ENCODE measurements at regions of chr7 and their contacts with region 1.

Region 1: DNA sequence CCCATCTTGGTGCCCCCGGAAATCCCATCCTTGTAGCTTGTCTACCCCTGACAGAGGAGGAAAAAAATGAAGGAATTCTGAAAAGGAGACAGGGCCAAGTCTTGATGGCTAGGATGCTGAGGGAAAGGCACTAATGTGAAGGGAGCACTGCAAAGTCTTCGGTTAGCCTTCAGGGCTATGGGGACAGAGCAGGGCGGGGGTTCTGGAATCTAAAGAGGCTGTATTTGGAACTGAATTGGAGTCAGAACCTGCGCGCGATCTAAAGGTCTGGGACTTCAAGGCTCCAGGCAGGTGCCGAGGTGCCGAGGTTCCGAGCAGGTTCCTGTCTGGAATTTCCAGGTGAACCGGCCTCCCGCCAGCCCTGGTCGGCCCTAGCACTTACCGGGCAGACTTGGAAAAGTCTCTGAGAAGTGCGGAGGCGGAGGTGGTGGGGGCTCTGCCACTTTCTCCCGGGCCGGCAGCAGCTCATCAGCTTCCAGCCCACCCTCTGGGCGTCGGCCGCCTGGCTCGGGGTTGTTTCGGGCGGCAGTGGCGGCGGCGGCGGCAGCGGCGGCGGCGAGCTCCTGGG is 781 bp downstream of the GBX1 start:
- H3K4me3 ChIP-seq: peak overlapping the region; percentile 48
- H3K27ac ChIP-seq: peak overlapping the region; percentile 40; the same call in 1 of the 2 replicates
- H3K4me1 ChIP-seq: no peaks in the 10 kb centered on the region
- CTCF ChIP-seq: no peak

Region 2: GRCh38 chr7:150753826-150754603 is 412.7 kb before region 1 on chr7:
- CTCF ChIA-PET with region 1: no interaction called
- POLR2A ChIA-PET with region 1: no interaction called
- H3K4me3 ChIP-seq: no peak overlapping the region
- H3K27ac ChIP-seq: no peak overlapping the region
- H3K4me1 ChIP-seq: no peaks in the 10 kb centered on the region
- CTCF ChIP-seq: 0 out of 2 replicates have a peak, but pooled peaks have one; percentile 29

Region 3: DNA sequence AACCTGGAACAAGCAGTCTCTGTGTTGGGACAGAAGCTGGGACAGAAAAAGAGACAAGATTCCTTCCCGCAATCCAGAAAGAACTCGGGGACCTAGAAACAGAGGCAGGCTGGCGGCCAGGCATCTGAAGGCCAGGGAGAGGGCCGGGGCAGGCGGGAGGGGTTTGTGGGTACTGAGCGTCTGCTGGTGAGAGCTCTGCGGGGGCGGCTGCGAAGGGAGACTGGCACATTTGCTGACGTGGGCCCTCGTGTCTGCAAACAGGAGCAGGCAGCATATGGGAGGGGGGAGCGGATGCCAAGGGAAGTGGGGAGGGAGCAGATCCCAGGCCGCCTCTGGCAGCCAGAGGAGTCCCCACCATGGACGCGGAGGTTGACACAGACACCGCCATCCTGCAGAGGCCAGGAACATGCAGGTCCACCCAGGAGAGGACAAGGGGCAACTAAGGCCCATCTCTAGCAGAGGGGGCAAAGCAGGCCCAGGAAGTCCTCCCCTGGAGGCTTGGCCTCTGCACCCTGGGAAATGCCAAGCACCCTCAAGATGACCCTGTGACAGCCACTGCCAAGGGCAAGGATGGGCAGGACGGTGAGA is 220.8 kb before region 1 on chr7:
- CTCF ChIA-PET with region 1: no interaction called
- POLR2A ChIA-PET with region 1: no interaction called
- H3K4me3 ChIP-seq: no peak overlapping the region
- H3K27ac ChIP-seq: no peak overlapping the region
- H3K4me1 ChIP-seq: no peaks in the 10 kb centered on the region
- CTCF ChIP-seq: no peak

Region 4: DNA sequence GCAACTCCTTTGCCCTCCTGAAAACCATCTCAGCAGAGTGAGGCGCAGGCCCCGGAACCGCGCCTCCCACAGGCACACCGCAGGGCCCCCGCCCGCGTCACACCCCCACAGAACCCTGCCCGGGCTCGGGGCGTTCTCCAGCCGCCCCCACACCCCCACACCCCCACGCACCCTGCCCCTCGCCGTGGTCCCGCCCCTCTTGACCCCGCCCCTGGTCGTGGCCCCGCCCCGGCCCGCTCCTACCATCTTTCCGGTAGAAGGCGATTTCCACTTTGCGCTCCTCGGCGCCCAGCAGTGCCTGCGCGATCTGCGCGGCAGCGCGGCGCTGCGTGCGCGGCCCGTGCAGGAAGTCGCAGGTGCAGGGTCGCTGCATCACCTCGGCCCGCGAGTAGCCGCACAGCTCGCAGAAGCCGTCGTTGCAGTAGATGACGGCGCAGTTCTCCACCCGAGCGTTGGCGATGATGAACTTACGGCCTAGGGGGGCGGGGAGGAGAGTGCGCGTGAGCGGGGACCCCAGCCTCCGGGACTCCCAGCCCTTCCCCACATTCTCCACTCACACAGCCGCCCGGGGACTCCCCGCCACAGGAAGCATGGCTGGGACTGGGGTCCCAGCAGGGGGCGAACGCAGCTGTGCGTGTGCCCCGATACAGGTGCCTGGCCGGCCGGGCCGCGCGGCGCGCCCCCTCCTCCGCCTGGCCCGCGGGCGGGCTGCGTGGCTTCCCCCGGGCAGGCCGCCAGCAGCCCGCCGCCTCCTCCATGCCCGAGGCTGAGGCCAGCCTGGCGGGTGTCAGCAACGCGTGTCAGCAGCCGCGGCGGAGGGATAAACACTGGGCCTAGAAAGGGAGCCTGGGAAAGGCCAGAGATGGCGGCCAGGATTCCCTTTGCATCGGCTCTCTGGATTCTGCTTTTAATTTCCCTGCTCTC is 192.0 kb before region 1 on chr7:
- CTCF ChIA-PET with region 1: no interaction called
- POLR2A ChIA-PET with region 1: no interaction called
- H3K4me3 ChIP-seq: peak overlapping the region; percentile 51
- H3K27ac ChIP-seq: peak overlapping the region; percentile 32; the same call in 1 of the 2 replicates
- H3K4me1 ChIP-seq: no peaks in the 10 kb centered on the region; the same call in 1 of the 2 replicates
- CTCF ChIP-seq: peak; percentile 80

Region 5: GRCh38 chr7:151123822-151124464 is 42.8 kb before region 1 on chr7:
- CTCF ChIA-PET with region 1: interaction called, 20 read pairs
- POLR2A ChIA-PET with region 1: no interaction called
- H3K4me3 ChIP-seq: no peak overlapping the region
- H3K27ac ChIP-seq: no peak overlapping the region
- H3K4me1 ChIP-seq: no peaks in the 10 kb centered on the region
- CTCF ChIP-seq: peak; percentile 99

Region 6: DNA sequence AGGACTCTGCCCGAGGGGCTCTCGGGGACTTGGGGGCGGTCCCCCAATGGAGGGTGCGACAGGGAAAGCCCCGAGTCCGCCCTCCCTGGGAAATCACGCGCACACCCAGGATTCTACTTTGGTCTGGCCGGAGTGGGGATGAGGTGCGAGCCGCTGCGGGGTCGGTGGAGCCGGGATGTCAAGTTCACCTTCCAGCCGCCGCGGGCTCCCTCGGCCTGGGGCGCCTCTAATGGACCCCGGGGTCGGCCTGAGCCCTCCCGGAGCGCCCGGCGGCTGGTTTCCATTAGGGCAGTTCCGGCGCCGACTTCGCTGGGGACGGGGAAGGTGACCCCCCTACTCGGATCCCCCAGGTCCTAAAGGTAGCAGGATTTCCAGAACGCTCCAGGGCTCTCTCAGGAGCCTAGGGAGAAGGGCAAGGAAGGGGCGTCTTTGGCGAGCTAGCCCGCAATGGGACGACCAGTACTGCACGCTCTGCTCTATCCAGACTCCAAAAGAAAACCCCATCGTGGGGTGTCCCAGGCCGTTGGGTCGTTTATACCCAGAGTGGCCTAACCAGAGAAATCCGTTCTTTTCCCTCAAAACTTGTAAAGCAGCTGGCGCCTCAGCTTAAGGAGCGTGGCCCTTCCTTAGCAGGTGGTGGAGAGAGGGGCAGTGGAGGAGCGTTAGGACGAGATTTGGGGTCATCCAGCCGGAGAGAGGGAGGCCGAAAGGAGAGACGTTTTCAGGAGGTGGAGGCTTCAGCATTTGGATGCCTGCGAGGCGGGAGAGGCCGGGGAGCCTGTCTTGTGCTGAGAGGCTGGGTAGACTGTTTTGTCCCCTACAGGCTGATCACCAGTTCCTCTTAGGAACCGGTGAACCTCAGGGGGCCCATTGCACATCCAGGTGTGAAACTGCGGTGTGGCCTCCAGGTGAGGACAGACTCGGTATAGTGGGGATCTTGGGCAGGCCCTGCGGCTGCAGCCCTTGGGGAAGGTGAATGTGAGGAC is 244.0 kb after region 1 on chr7:
- CTCF ChIA-PET with region 1: no interaction called
- POLR2A ChIA-PET with region 1: no interaction called
- H3K4me3 ChIP-seq: peak overlapping the region; percentile 56
- H3K27ac ChIP-seq: peak overlapping the region; percentile 63; the same call in 1 of the 2 replicates
- H3K4me1 ChIP-seq: no peaks in the 10 kb centered on the region
- CTCF ChIP-seq: no peak

Measured in HEK293 (cell line).